ENCODE measurements at regions of chr15 and their contacts with region 1.

Region 1: DNA sequence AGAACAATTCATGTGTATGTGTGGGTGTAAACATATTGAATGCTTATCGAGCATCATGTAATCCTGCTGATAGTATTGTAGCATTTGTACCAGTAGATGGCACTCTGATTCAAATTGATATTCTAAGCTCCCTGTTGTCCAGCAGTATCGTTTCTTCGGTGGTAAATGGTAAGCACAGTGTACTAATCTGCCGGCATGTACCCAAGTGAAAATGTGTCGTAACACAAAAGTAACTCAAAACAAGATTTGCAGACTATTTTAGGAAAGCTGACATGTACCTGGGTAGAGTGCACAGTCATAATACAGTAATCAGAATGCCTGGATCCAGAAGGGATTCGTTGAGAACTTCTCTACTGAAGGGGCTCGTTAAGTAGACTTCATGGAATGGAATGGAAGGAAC is 31.7 kb upstream of the MNS1 start:
- DNase-seq: peak; percentile 64
- ATAC-seq: peak; percentile 96
- H3K4me3 ChIP-seq: no peak overlapping the region
- H3K27ac ChIP-seq: no peak overlapping the region
- H3K4me1 ChIP-seq: no peaks in the 10 kb centered on the region
- H3K27me3 ChIP-seq: no peaks in the 10 kb centered on the region
- CTCF ChIP-seq: peak; percentile 75

Region 2: GRCh38 chr15:56869573-56869972 is 372.9 kb after region 1 on chr15:
- CTCF ChIA-PET with region 1: no interaction called
- POLR2A ChIA-PET with region 1: no interaction called
- in situ Hi-C with region 1: no loop called
- intact Hi-C with region 1: loop called (anchors 2 kb)
- DNase-seq: no peak
- ATAC-seq: no peak
- H3K4me3 ChIP-seq: no peak overlapping the region
- H3K27ac ChIP-seq: no peak overlapping the region
- H3K4me1 ChIP-seq: no peaks in the 10 kb centered on the region
- H3K27me3 ChIP-seq: no peaks in the 10 kb centered on the region
- CTCF ChIP-seq: peak; percentile 70

Region 3: DNA sequence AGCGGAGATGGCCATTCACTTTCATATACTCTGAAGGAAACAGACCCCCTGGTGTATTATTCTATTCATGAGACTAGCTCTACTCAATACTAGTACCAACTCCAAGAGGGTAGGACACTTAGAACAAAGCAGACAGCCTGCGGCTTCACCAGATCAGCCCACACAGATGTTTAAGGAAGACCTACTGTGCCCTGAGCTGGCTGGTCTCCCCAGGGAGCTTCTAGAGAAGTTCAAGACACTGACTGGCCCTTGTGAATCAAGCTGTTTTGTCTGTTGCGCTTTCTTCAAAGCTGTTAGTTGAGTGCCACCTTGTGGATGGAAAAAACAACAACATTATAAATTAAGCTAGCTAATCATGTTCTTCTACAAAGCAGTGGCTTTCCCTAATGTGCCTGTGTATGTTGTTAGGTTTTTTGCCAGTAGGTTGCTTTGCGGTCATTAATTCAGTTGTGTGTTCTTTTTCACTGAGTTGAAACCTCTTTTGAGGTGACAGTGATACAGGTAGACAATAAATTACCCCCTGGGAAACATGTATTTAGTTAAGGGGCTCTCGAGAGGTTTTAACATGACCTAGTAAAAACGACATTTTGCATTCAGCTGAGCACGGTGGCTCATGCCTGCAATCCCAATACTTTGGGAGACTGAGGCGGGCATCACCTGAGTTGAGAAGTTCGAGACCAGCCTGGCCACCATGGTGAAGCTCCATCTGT is 1030.9 kb after region 1 on chr15:
- CTCF ChIA-PET with region 1: no interaction called
- POLR2A ChIA-PET with region 1: no interaction called
- in situ Hi-C with region 1: no loop called
- intact Hi-C with region 1: loop called (anchors 5 kb)
- DNase-seq: peak; percentile 42
- ATAC-seq: peak; percentile 85
- H3K4me3 ChIP-seq: no peak overlapping the region
- H3K27ac ChIP-seq: no peak overlapping the region
- H3K4me1 ChIP-seq: no peaks in the 10 kb centered on the region; the same call in 1 of the 2 replicates
- H3K27me3 ChIP-seq: peaks cover 4% of the 10 kb centered on the region
- CTCF ChIP-seq: peak; percentile 74

Measured in Panc1 (cell line).